ENCODE measurements at regions of chr5 and their contacts with region 1.

Region 1: GRCh38 chr5:98928873-98929696 is at the start of gene CHD1:
- DNase-seq: peak; percentile 98
- ATAC-seq: peak; percentile 74
- H3K4me3 Mint-ChIP-seq: peak within 1 kb of the TSS; percentile 87
- H3K27ac Mint-ChIP-seq: peak within 1 kb of the TSS; percentile 99
- H3K4me1 Mint-ChIP-seq: peaks cover 51% of the 10 kb centered on the region
- H3K27me3 Mint-ChIP-seq: no peaks in the 10 kb centered on the region
- CTCF ChIP-seq: no peak
- total RNA-seq, gene CHD1: 52.0 to 52.8 TPM

Region 2: DNA sequence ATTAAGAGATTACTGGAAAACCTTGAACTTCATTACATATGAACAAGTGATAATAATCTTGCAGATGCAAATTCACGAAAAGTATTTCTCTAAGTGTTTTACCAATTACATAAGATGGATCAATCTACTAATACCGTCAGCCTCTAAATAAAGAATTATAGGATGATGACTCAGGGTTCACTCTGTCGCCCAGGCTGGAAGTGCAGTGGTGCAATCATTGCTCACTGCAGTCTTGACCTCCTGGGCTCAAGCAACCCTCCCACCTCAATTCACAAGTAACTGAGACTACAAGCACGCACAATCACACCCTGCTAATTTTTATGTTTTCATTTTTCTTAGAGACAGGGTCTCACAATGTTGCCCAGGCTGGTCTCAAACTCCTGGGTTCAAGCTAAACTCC is 56.4 kb before region 1 on chr5:
- CTCF ChIA-PET with region 1: no interaction called
- POLR2A ChIA-PET with region 1: no interaction called
- intact Hi-C with region 1: no loop called
- DNase-seq: no peak
- ATAC-seq: no peak
- H3K4me3 Mint-ChIP-seq: no peak overlapping the region
- H3K27ac Mint-ChIP-seq: no peak overlapping the region
- H3K4me1 Mint-ChIP-seq: no peaks in the 10 kb centered on the region
- H3K27me3 Mint-ChIP-seq: no peaks in the 10 kb centered on the region
- CTCF ChIP-seq: no peak

Region 3: DNA sequence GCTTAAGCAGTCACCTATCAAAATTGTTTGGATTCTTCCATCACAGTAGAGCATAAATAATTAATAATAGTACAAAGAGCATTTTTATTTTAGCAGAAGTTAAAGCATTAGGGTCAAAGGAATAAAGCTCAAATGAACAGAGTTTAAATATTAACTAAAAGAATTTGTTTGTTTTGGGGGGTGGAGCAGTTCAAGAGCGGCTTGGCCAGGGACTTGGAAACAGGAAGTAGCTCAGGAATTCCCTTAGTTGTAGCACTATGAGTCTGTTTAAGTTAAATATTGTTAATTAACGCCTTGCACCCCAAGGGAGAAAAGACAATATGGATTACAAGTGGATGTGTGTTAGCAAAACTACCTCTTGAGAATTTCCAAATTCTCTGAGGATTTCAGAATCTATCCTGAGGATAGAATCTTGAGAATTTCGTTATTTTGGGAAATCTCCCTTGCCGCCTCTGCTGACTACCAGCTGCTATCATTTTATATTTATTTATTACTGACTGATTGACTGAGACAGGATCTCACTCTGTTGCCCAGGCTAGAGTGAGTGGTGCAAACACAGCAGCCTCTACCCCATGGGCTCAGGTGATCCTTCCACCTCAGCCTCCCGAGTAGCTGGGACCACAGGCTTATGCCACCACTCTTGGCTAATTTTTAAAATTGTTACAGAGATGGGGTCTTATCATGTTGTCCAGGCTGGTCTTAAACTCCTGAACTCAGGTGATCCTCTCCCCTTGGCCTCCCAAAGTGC is 96.4 kb after region 1 on chr5:
- CTCF ChIA-PET with region 1: interaction called, 3 read pairs
- POLR2A ChIA-PET with region 1: interaction called, 11 read pairs
- intact Hi-C with region 1: loop called (anchors 5 kb)
- DNase-seq: no peak
- ATAC-seq: no peak
- H3K4me3 Mint-ChIP-seq: no peak overlapping the region
- H3K27ac Mint-ChIP-seq: no peak overlapping the region
- H3K4me1 Mint-ChIP-seq: peaks cover 25% of the 10 kb centered on the region
- H3K27me3 Mint-ChIP-seq: no peaks in the 10 kb centered on the region
- CTCF ChIP-seq: no peak

Region 4: DNA sequence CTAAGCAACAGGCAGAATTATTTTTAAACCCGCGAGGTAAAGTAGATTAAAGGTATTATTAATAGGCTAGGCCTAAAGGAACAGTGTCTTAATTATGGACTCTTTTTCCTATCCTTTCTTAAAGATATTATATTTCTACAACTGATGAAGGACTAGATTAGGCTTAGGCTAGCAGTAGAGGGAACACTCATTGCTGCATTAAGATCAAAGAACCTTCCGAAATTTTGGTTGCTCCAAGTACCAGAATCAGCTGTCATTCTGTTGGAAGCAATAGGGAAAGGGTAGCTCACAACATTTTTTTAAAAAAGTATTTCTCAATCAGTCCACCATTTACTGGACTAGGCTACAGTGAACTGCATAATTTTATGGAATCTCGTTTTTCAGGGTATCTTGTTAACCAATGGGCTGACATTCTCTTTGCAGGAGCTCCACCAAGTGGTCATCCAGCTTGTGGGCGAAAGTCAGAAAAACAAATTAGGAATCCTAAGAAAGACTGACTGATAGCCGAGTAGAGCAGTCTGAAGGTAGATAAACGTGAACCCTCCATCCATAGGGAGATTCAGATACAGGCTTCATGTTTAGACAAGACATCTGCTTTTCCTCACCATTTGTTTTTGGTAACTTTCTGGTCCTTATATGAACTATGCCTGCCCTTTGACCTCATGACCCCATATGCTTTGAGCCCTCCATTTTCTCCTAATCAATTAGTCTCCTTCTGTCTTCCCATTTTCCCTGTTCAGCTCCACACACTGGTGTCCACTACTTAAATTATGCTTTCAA is 103.3 kb after region 1 on chr5:
- CTCF ChIA-PET with region 1: interaction called, 7 read pairs
- POLR2A ChIA-PET with region 1: interaction called, 11 read pairs
- intact Hi-C with region 1: loop called (anchors 5 kb)
- DNase-seq: peak; percentile 54
- ATAC-seq: peak; percentile 41
- H3K4me3 Mint-ChIP-seq: peak overlapping the region; percentile 74
- H3K27ac Mint-ChIP-seq: peak overlapping the region; percentile 91
- H3K4me1 Mint-ChIP-seq: peaks cover 59% of the 10 kb centered on the region
- H3K27me3 Mint-ChIP-seq: no peaks in the 10 kb centered on the region
- CTCF ChIP-seq: peak; percentile 36

Region 5: GRCh38 chr5:99081711-99082110 is 152.6 kb after region 1 on chr5:
- CTCF ChIA-PET with region 1: no interaction called
- POLR2A ChIA-PET with region 1: no interaction called
- intact Hi-C with region 1: no loop called
- DNase-seq: no peak
- ATAC-seq: no peak
- H3K4me3 Mint-ChIP-seq: no peak overlapping the region
- H3K27ac Mint-ChIP-seq: no peak overlapping the region
- H3K4me1 Mint-ChIP-seq: no peaks in the 10 kb centered on the region
- H3K27me3 Mint-ChIP-seq: no peaks in the 10 kb centered on the region
- CTCF ChIP-seq: no peak